ENCODE measurements at regions of chr2 and their contacts with region 1.

Region 1: DNA sequence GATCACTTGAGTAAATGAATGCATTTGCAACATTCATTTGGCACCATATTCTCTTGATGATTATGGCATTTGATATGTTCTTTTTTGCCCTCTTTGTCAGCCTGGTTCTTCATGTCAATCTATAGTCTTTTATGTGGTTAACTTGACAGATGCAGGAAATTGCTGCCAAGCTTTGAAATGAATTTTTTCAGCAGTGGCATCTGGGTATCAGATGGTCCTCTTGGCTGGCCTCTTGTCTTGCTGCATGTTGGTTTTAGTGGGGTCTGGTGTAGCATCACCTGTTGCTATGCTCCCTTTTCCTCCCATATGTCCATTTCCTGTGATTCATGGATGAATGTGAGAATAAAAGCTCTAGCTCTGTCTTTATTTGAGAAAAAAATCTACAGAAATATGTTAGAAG is 119.9 kb downstream of the DPP4 start:
- DNase-seq: no peak
- ATAC-seq: peak; percentile 15
- H3K4me3 Mint-ChIP-seq: no peak overlapping the region
- H3K27ac Mint-ChIP-seq: peak overlapping the region; percentile 89
- H3K4me1 Mint-ChIP-seq: peaks cover 54% of the 10 kb centered on the region
- H3K27me3 Mint-ChIP-seq: no peaks in the 10 kb centered on the region

Region 2: DNA sequence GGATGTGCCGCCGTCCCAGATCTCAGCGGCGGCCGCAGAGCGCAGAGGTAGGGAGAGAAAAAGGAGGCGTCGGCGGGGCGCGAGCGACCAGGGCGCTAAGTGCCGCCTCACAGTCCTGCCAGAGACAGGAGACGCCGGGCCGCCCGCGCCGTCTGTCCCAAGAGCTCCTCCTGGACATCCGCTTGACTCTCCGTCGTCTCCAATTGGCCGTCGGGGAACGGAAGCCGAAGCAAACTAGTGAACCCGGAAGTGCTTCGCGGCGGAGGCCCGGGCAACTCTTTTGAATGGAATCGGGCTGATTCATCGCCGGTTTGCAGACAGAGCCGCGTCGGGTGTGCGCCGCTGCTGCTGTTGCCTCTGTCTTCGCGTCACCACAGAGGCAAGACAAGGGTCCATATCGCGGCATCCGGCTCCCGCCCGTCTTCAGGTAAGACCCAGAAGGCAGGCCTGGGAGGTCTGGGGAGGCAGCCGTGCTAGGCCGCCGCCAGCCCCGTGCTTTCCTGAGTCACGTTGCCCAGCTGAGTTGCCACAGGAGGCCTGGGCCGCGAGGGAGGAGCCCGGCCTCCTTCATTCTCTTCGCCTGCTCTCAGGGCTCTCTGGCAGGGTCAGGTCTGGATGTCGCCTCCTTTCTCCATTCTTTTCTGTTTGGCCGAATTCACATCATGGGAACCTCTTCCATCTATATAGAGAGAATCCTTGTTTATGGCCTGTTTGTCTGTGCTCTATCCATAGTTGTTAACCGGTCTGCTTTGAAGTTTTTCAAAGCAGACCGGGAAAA is 645.7 kb before region 1 on chr2 and contains the start of gene PSMD14:
- CTCF ChIA-PET with region 1: no interaction called
- POLR2A ChIA-PET with region 1: no interaction called
- intact Hi-C with region 1: loop called in 1 of 2 experiments (anchors 1 kb)
- DNase-seq: peak; percentile 96
- ATAC-seq: peak; percentile 91
- H3K4me3 Mint-ChIP-seq: peak within 1 kb of the TSS; percentile 87
- H3K27ac Mint-ChIP-seq: peak within 1 kb of the TSS; percentile 93
- H3K4me1 Mint-ChIP-seq: peaks cover 28% of the 10 kb centered on the region
- H3K27me3 Mint-ChIP-seq: no peaks in the 10 kb centered on the region
- total RNA-seq, gene PSMD14: 69.5 to 85.7 TPM

Region 3: DNA sequence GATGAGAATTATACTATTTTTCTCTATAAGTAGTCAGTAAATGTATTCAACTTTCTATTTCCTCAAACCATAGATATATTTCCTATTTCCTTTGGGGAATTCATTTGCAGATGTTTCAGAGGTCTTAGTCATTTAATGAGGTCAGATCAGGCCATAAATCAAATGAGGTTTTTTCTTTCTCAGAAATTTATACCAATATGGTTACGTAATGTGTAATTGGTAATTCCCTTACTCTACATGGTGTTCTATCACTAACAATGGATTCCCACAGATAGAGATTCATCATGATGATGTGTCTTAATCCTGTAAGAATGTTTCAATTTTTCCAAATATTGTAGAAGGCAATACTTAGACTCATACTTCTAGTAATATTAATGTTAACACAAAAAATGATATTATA is 11.9 kb after region 1 on chr2:
- CTCF ChIA-PET with region 1: interaction called, 14 read pairs
- POLR2A ChIA-PET with region 1: interaction called, 8 read pairs
- intact Hi-C with region 1: loop called (anchors 1 kb)
- DNase-seq: no peak
- ATAC-seq: peak; percentile 68
- H3K4me3 Mint-ChIP-seq: no peak overlapping the region
- H3K27ac Mint-ChIP-seq: no peak overlapping the region
- H3K4me1 Mint-ChIP-seq: peaks cover 26% of the 10 kb centered on the region
- H3K27me3 Mint-ChIP-seq: peaks cover 3% of the 10 kb centered on the region

Region 4: DNA sequence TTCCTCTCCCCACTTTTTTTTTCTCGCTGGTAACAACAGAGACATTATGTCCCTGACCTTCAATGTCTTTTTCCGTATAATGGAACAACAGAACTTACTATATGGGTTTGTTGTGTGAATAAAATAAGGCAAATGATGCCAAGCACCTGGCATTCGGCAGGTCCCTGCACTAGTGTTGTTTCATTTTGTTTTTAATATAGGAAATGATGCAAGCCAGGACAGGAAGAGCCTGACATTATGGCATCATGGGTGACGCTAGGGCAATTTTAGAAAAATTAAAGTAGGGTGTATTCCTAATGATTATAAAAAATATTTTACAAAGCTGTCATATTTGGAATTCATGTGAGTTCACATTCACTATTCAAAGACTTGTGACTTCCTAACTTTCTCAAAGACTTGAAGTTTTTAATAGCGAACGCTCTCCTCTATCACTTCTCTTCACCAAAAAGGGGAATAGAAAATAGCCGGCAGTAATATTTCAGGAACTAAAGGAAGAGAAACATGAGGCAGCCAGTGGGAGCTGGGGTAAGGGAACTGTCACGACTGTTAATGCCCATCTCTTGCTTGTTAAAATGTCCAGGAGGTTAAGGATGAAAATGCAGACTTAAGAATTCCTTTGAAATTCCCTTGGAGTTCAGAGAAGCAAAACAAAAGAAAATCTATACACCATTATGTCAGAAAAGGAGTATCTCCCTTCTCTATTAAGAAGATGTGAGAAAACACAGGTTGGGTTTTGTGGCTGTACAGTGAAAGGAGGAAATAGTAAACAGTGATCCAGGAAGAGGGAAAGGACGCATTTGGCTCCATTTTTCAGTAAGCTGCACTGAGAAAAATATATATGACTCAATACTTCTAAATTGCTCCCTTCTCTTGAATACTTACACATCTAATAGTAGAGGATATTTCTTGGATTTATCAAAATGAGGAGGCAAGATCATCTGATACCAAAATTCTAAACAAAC is 59.7 kb after region 1 on chr2:
- CTCF ChIA-PET with region 1: no interaction called
- POLR2A ChIA-PET with region 1: no interaction called
- intact Hi-C with region 1: loop called in 1 of 2 experiments (anchors 5 kb)
- DNase-seq: no peak
- ATAC-seq: peak; percentile 27
- H3K4me3 Mint-ChIP-seq: peak overlapping the region; percentile 47
- H3K27ac Mint-ChIP-seq: peak overlapping the region; percentile 95
- H3K4me1 Mint-ChIP-seq: peaks cover 56% of the 10 kb centered on the region
- H3K27me3 Mint-ChIP-seq: no peaks in the 10 kb centered on the region

Region 5: GRCh38 chr2:162073888-162074645 is 120.0 kb after region 1 on chr2 and contains the start of gene DPP4:
- CTCF ChIA-PET with region 1: interaction called, 4 read pairs
- POLR2A ChIA-PET with region 1: interaction called, 4 read pairs
- intact Hi-C with region 1: loop called (anchors 2 to 5 kb)
- DNase-seq: peak; percentile 71
- ATAC-seq: peak; percentile 63
- H3K4me3 Mint-ChIP-seq: peak within 1 kb of the TSS; percentile 94
- H3K27ac Mint-ChIP-seq: peak within 1 kb of the TSS; percentile 91
- H3K4me1 Mint-ChIP-seq: peaks cover 43% of the 10 kb centered on the region
- H3K27me3 Mint-ChIP-seq: peaks cover 2% of the 10 kb centered on the region
- total RNA-seq, gene DPP4: 15.9 to 22.4 TPM

Region 6: DNA sequence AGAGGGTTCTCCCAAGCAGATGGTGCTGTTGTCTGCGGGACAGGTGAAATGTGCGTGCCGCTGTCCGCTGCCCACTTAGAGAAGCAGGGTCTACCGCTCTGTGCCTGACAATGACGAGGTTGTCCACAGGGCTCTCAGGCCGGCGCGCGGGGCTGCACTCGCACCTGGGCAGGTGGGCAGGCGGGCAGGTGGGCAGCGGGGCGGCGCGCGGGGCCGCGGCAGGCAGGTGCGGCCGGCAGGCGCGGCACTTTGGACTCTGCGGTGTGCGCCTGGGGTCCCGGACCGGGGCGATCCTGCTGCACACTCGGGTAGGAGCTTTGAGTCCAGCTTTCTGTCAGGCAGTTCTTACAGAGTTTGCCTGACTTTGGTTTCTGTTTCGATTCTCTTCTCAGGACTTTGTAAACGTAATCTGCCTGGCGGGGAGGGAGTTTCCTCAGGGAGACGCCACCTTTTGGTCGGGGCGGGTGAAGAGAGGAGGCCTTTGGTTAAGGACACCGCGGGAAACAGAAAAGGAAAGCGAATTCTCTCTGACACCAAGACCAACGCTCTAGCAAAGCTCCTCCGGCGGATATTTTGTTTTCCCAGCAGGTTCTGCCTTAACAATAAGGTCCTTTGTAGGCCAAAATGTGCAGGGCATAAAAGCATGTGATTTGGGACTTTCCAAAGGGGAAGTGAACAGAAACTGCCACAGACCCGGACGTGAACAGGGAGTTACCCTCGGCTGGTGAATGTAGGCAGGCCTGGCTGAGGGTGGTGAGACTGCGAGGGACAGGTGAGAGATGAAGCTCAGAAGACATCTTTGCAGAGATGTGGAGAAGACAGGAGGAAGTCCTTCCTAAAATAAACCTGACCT is 364.5 kb after region 1 on chr2 and contains the start of gene IFIH1:
- CTCF ChIA-PET with region 1: no interaction called
- POLR2A ChIA-PET with region 1: no interaction called
- intact Hi-C with region 1: loop called in 1 of 2 experiments (anchors 5 kb)
- DNase-seq: peak; percentile 87
- ATAC-seq: peak; percentile 93
- H3K4me3 Mint-ChIP-seq: peak within 1 kb of the TSS; percentile 85
- H3K27ac Mint-ChIP-seq: peak within 1 kb of the TSS; percentile 98
- H3K4me1 Mint-ChIP-seq: peaks cover 54% of the 10 kb centered on the region
- H3K27me3 Mint-ChIP-seq: no peaks in the 10 kb centered on the region
- total RNA-seq, gene IFIH1: 36.8 to 42.3 TPM